ENCODE measurements at regions of chr19 and their contacts with region 1.

Region 1: DNA sequence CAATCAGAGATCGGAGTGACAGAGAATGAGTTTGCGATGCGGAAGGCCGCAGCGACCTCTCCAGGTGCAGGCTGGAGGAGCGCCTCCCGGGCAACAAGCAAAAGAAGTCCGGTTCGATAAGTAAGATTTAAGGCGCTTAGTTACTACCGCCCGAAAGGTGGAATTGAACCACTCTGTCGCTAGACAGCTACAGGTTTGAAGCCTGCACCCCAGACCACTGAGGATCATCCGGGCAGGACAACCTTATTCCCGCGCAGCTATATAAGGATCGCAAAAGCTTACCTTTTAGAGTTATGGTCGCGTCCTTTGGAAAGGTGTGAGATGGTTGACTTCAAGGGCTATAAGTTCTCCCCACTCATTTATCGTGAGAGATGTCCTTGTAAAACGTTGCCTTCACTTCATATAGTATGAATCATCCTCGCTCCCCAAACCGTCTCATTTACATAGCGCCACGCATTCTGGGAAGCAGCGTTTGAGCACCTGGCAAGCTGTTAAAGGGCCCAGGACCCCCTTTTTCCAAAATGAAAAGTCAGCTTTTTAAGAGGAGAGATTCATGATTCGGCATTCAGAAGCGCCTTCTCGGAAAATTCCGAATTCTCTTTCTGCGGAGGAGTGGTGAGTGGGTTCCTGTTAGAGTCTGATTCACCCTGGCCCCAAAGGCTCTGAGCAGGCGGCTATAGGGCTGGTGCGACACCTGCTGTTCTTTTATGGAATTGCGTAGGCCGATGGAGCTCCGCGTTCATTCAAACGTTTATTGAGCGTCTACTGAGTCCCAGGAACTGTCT is 10.8 kb downstream of the FOSB start:
- DNase-seq: peak; percentile 94
- H3K4me3 Mint-ChIP-seq: peak overlapping the region; percentile 61
- H3K27ac Mint-ChIP-seq: peak overlapping the region; percentile 94
- H3K4me1 Mint-ChIP-seq: peaks cover 41% of the 10 kb centered on the region
- H3K27me3 Mint-ChIP-seq: peaks cover 10% of the 10 kb centered on the region

Region 2: GRCh38 chr19:45406226-45407090 is 72.2 kb before region 1 on chr19 and contains the start of gene POLR1G:
- CTCF ChIA-PET with region 1: interaction called, 26 read pairs
- POLR2A ChIA-PET with region 1: interaction called, 9 read pairs
- DNase-seq: peak; percentile 82
- H3K4me3 Mint-ChIP-seq: peak within 1 kb of the TSS; percentile 84
- H3K27ac Mint-ChIP-seq: peak within 1 kb of the TSS; percentile 79
- H3K4me1 Mint-ChIP-seq: peaks cover 46% of the 10 kb centered on the region
- H3K27me3 Mint-ChIP-seq: peaks cover 24% of the 10 kb centered on the region
- total RNA-seq, gene POLR1G: 3.6 to 3.8 TPM

Region 3: DNA sequence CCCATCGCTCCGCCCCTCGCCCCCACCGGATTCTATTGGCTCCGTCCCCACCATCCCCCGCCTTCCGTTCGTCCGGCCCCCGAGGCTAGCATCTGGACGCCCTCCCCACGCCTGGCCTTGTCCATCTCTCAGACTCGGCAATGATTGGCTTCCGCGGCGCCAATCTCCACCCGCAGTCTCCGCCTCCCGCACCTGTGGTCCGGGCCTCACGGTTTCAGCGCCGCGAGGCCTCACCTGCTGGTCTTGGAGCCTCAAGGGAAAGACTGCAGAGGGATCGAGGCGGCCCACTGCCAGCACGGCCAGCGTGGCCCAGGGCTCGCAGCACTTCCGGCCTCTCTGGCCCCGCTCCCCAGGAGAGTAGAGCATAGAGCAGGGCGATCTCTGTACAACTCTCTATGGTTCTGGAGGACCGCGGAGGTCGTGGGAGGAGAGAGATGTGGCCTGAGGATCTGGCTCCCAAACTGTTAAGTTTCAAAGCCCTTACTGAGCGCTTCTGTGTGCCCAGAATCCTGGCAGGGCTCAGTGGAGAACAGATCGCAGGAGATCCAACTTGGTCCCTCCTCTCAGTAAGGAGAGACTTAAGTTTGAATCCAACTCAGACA is 55.0 kb before region 1 on chr19 and contains the start of gene ERCC1:
- CTCF ChIA-PET with region 1: interaction called, 21 read pairs
- POLR2A ChIA-PET with region 1: interaction called, 6 read pairs
- DNase-seq: peak; percentile 92
- H3K4me3 Mint-ChIP-seq: peak within 1 kb of the TSS; percentile 89
- H3K27ac Mint-ChIP-seq: peak within 1 kb of the TSS; percentile 93
- H3K4me1 Mint-ChIP-seq: peaks cover 69% of the 10 kb centered on the region
- H3K27me3 Mint-ChIP-seq: peaks cover 7% of the 10 kb centered on the region
- total RNA-seq, gene ERCC1: 59.8 to 60.6 TPM

Region 4: GRCh38 chr19:45450012-45450333 is 28.7 kb before region 1 on chr19:
- CTCF ChIA-PET with region 1: interaction called, 22 read pairs
- POLR2A ChIA-PET with region 1: interaction called, 12 read pairs
- DNase-seq: peak; percentile 47
- H3K4me3 Mint-ChIP-seq: peak overlapping the region; percentile 91
- H3K27ac Mint-ChIP-seq: peak overlapping the region; percentile 92
- H3K4me1 Mint-ChIP-seq: peaks cover 51% of the 10 kb centered on the region
- H3K27me3 Mint-ChIP-seq: peaks cover 2% of the 10 kb centered on the region

Region 5: GRCh38 chr19:45455707-45456499 is 22.7 kb before region 1 on chr19:
- CTCF ChIA-PET with region 1: interaction called, 16 read pairs
- POLR2A ChIA-PET with region 1: no interaction called
- DNase-seq: peak; percentile 54
- H3K4me3 Mint-ChIP-seq: no peak overlapping the region
- H3K27ac Mint-ChIP-seq: no peak overlapping the region
- H3K4me1 Mint-ChIP-seq: peaks cover 31% of the 10 kb centered on the region
- H3K27me3 Mint-ChIP-seq: peaks cover 6% of the 10 kb centered on the region

Region 6: DNA sequence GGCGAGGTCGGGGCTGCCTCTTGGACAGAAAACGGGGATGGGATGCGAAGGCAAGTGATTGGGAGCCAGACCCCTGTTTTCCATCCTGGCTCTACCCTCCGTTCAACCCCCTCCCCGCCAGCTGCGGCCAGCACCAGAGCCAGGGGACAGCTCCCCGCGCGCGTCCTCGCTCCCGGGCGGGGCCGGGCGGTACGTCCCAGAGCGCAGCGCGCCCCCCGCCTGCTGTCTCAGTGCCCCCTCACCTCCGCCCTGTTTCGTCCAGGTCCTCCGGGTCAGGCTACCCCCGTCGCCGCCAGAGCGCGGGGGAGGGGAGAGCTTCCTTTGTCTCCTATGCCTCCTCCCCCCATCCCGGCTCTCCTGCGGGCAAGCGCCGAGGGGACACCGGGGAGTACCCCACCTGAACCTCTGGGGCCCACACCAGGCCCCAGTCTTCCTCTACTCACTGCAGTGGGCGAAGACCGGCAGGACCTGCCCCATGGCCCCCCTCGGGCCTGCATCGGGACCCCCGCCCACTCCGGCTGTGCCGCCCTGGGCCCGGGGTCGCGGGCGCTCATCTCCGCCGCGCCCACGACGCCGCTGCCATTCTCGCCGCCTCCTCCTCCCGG is 17.8 kb after region 1 on chr19:
- CTCF ChIA-PET with region 1: interaction called, 10 read pairs
- POLR2A ChIA-PET with region 1: interaction called, 3 read pairs
- DNase-seq: peak; percentile 63
- H3K4me3 Mint-ChIP-seq: peak overlapping the region; percentile 59
- H3K27ac Mint-ChIP-seq: no peak overlapping the region
- H3K4me1 Mint-ChIP-seq: peaks cover 53% of the 10 kb centered on the region
- H3K27me3 Mint-ChIP-seq: peaks cover 40% of the 10 kb centered on the region

Region 7: GRCh38 chr19:45523642-45524256 is 45.1 kb after region 1 on chr19:
- CTCF ChIA-PET with region 1: no interaction called
- POLR2A ChIA-PET with region 1: no interaction called
- DNase-seq: peak; percentile 78
- H3K4me3 Mint-ChIP-seq: no peak overlapping the region
- H3K27ac Mint-ChIP-seq: peak overlapping the region; percentile 65
- H3K4me1 Mint-ChIP-seq: peaks cover 40% of the 10 kb centered on the region
- H3K27me3 Mint-ChIP-seq: no peaks in the 10 kb centered on the region

Measured in activated CD4-positive, alpha-beta memory T cell treated with anti-CD3 and anti-CD28 coated beads, Interleukin-2, amount 10 ng/mL, durations not matched to agents 7 days and 5 days (primary cell).